ENCODE measurements at regions of chr13 and their contacts with region 1.

Region 1: DNA sequence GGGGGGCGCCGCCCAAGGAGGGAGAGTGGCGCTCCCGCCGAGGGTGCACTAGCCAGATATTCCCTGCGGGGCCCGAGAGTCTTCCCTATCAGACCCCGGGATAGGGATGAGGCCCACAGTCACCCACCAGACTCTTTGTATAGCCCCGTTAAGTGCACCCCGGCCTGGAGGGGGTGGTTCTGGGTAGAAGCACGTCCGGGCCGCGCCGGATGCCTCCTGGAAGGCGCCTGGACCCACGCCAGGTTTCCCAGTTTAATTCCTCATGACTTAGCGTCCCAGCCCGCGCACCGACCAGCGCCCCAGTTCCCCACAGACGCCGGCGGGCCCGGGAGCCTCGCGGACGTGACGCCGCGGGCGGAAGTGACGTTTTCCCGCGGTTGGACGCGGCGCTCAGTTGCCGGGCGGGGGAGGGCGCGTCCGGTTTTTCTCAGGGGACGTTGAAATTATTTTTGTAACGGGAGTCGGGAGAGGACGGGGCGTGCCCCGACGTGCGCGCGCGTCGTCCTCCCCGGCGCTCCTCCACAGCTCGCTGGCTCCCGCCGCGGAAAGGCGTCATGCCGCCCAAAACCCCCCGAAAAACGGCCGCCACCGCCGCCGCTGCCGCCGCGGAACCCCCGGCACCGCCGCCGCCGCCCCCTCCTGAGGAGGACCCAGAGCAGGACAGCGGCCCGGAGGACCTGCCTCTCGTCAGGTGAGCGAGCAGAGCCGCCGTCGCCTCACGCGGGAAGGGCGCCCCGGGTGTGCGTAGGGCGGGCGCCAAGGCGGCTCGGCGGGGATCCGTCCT is at the start of gene RB1:
- DNase-seq: peak; percentile 92
- H3K4me3 ChIP-seq: peak within 1 kb of the TSS; percentile 93
- H3K27ac ChIP-seq: peak within 1 kb of the TSS; percentile 94
- H3K4me1 ChIP-seq: peaks cover 28% of the 10 kb centered on the region
- CTCF ChIP-seq: no peak
- total RNA-seq, gene RB1: 31.7 and 33.5 TPM in 2 replicates

Region 2: DNA sequence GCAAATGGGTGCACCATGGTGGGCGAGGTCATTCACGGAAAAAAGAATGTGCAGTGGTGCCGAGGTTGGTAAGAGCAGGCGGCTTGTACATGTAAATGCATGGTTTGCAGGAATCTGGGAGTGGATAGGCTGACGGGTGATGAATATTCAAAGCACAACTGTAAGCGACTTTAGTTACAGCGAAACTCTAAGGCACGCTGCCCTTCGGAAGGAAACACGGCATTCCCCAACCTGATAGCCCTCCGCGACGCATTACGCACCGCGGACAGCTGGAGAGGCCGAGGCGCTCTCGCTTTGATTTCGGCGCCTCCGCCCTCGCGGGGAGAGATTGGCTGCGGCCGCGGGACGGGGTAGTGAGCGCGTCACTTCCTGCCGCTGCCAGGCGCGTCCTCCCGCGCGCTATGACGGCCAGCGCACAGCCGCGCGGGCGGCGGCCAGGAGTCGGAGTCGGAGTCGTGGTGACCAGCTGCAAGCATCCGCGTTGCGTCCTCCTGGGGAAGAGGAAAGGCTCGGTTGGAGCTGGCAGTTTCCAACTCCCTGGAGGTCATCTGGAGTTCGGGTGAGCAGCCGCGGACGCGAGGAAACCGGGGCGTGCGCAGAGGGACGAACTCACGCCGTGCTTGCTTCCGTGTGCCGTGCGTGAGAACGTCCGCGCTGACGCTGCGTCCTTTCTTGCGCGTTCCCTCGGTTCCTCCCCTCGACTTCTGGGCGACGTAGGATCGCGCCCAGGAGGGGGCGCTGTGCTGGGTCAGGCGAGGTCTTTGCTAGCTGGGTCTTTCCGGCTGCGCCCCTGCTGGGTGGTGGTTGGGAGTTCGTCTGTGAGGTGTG is 266.0 kb before region 1 on chr13 and contains the start of gene NUDT15:
- CTCF ChIA-PET with region 1: no interaction called
- POLR2A ChIA-PET with region 1: no interaction called
- intact Hi-C with region 1: loop called (anchors 5 kb)
- DNase-seq: peak; percentile 98
- H3K4me3 ChIP-seq: peak within 1 kb of the TSS; percentile 78
- H3K27ac ChIP-seq: peak within 1 kb of the TSS; percentile 89
- H3K4me1 ChIP-seq: peaks cover 27% of the 10 kb centered on the region
- CTCF ChIP-seq: peak; percentile 97
- total RNA-seq, gene NUDT15: 19.3 and 26.8 TPM in 2 replicates

Region 3: DNA sequence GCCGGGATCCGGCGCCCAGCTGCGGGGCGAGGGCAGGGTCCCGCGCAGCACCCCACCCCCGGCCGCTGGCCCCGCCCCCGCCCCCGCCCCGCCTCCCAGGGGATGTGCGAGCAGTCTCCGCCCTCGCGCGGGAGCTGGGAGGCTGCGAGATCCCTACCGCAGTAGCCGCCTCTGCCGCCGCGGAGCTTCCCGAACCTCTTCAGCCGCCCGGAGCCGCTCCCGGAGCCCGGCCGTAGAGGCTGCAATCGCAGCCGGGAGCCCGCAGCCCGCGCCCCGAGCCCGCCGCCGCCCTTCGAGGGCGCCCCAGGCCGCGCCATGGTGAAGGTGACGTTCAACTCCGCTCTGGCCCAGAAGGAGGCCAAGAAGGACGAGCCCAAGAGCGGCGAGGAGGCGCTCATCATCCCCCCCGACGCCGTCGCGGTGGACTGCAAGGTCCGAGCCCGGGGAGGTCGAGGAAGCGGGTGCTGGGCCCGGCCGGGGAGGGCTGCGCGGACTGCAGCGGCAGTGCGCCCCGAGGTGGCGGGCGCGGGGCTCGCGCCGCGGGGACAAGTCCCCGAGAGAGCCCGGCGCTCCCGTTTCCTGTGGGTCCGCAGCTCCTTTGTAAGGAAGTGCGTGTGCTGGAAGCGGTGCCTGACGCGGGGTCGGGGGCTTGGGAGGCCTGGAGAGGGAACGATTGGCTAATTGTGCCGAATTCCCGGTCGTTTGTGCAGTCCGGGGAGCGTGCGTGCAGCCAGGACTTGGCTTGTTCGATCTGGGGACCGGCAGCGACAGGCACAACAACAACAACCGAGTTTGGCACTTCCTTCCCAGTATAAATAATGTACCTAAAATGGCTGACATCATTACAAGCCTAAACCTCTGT is 70.3 kb before region 1 on chr13 and contains the start of gene ITM2B:
- CTCF ChIA-PET with region 1: no interaction called
- POLR2A ChIA-PET with region 1: interaction called, 3 read pairs
- intact Hi-C with region 1: loop called (anchors 2 kb)
- DNase-seq: peak; percentile 77
- H3K4me3 ChIP-seq: peak within 1 kb of the TSS; percentile 76
- H3K27ac ChIP-seq: peak within 1 kb of the TSS; percentile 49
- H3K4me1 ChIP-seq: peaks cover 31% of the 10 kb centered on the region
- CTCF ChIP-seq: peak; percentile 79
- total RNA-seq, gene ITM2B: 14.7 and 21.1 TPM in 2 replicates

Region 4: GRCh38 chr13:48562296-48563066 is 258.9 kb after region 1 on chr13:
- CTCF ChIA-PET with region 1: no interaction called
- POLR2A ChIA-PET with region 1: interaction called, 3 read pairs
- intact Hi-C with region 1: loop called (anchors 1 kb)
- DNase-seq: peak; percentile 94
- H3K4me3 ChIP-seq: peak overlapping the region; percentile 52
- H3K27ac ChIP-seq: peak overlapping the region; percentile 83
- H3K4me1 ChIP-seq: peaks cover 50% of the 10 kb centered on the region
- CTCF ChIP-seq: no peak

Measured in OCI-LY7 (cell line).